Activated T-helper 2 cell treated with anti-CD3 and anti-CD28 coated beads, Interferon-gamma antibody, Interleukin-2, Interleukin-4, amounts not matched to agents 10 μg/mL and 5 μg/mL and 100 μg/mL, durations not matched to agents 14 hours and 24 hours and 36 hours (primary cell): ENCODE measurements at regions of chr6 and their contacts with region 1.

Region 1: GRCh38 chr6:149565527-149566409 is at the start of gene GINM1:
- DNase-seq: peak; percentile 96
- H3K4me3 Mint-ChIP-seq: peak within 1 kb of the TSS; percentile 89
- H3K27ac Mint-ChIP-seq: peak within 1 kb of the TSS; percentile 86
- H3K4me1 Mint-ChIP-seq: peaks cover 12% of the 10 kb centered on the region
- H3K27me3 Mint-ChIP-seq: peaks cover 4% of the 10 kb centered on the region
- total RNA-seq, gene GINM1: 17.6 and 19.0 TPM in 2 replicates

Region 2: DNA sequence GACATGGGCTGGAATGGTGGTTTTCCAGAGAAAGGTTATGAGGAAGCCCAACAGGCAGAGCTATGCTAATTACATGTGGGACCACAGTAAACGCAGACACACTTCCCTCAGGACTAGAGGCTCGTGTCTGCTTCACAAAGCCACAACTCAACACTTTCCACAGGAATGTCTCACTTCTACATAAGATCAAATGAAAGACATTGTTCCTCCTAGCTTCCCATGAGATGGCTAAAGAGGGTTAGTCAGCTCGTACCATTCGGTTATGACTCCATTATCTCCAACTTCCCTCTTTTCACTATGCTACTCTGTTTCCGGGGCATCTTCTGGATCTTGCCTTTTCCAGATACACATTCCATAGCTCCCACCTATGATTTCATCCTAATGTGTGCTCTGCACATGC is 51.9 kb before region 1 on chr6:
- intact Hi-C with region 1: no loop called
- DNase-seq: no peak
- H3K4me3 Mint-ChIP-seq: no peak overlapping the region
- H3K27ac Mint-ChIP-seq: no peak overlapping the region
- H3K4me1 Mint-ChIP-seq: peaks cover 39% of the 10 kb centered on the region
- H3K27me3 Mint-ChIP-seq: no peaks in the 10 kb centered on the region

Region 3: GRCh38 chr6:149648148-149649145 is 82.7 kb after region 1 on chr6 and contains the start of gene KATNA1:
- intact Hi-C with region 1: loop called (anchors 1 kb)
- DNase-seq: peak; percentile 87
- H3K4me3 Mint-ChIP-seq: peak within 1 kb of the TSS; percentile 91
- H3K27ac Mint-ChIP-seq: peak within 1 kb of the TSS; percentile 81
- H3K4me1 Mint-ChIP-seq: peaks cover 24% of the 10 kb centered on the region
- H3K27me3 Mint-ChIP-seq: no peaks in the 10 kb centered on the region
- total RNA-seq, gene KATNA1: 18.9 and 20.8 TPM in 2 replicates

Region 4: GRCh38 chr6:149746147-149746946 is 180.6 kb after region 1 on chr6 and contains the start of gene NUP43:
- intact Hi-C with region 1: loop called (anchors 1 kb)
- DNase-seq: peak; percentile 90
- H3K4me3 Mint-ChIP-seq: peak within 1 kb of the TSS; percentile 99
- H3K27ac Mint-ChIP-seq: peak within 1 kb of the TSS; percentile 92
- H3K4me1 Mint-ChIP-seq: peaks cover 25% of the 10 kb centered on the region
- H3K27me3 Mint-ChIP-seq: no peaks in the 10 kb centered on the region
- total RNA-seq, gene NUP43: 70.8 and 80.6 TPM in 2 replicates

Region 5: GRCh38 chr6:149925974-149926777 is 360.4 kb after region 1 on chr6:
- intact Hi-C with region 1: loop called (anchors 10 kb)
- DNase-seq: peak; percentile 65
- H3K4me3 Mint-ChIP-seq: peak overlapping the region; percentile 55
- H3K27ac Mint-ChIP-seq: no peak overlapping the region
- H3K4me1 Mint-ChIP-seq: peaks cover 18% of the 10 kb centered on the region
- H3K27me3 Mint-ChIP-seq: peaks cover 83% of the 10 kb centered on the region

Region 6: DNA sequence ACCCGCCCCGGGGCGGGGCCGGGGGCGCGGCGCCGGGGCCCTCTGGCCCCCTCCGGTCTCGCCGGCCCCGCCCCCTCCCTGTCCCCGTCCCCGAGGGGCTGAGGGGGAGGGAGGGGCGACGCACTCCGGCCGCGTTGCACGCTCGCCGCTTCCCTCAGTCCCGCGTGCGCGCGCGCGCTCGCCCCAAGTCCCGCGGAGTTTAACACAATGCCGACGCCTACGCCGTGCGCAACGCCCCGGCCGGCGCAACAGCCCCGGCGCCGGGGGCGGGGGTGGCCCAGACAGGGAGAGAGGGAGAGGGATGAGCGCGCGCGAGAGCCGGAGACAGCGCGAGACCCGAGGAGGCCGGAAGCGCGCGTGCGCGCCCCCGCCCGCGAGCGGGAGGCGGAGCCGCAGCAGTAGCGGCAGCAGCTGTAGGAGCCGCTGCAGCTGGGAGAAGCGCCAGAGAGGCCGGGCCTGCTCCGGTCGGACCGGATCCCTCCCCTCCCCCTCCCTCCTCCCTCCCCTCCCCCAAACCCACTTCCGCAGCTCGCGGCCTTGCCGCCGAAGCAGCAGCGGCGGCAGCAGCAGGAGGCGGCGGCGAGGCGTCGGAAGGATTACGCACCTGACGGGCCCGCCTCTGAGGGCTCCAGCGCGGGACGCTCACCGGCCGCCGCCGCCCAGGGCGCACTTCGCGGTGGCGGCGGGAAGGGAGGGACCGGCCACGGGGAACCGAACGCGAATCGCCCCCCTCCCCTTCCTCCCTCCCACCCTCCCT is 1824.7 kb after region 1 on chr6:
- intact Hi-C with region 1: loop called (anchors 10 kb)
- DNase-seq: peak; percentile 98
- H3K4me3 Mint-ChIP-seq: peak overlapping the region; percentile 49
- H3K27ac Mint-ChIP-seq: peak overlapping the region; percentile 55
- H3K4me1 Mint-ChIP-seq: peaks cover 48% of the 10 kb centered on the region
- H3K27me3 Mint-ChIP-seq: no peaks in the 10 kb centered on the region